ENCODE measurements at regions of chr12 and their contacts with region 1.

Region 1: DNA sequence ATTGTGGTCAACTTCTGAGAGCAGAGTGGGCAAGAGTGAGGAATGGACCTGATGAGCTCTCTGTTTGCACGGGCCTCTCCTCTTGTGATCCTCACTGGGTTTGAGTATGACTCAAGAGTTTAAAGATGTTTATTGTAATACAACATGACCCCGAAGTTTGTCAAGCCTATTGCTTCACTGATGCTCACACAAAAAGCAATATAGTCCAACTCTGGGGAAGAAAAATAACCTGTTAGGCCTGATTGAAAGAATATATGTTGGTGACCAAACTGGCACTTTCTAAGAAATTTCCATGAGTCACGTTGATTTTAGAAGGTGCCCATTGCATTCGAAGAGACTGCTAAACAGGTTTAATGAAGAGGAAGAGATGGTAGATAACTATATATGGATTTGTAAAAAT is 154.0 kb downstream of the TBX5 start:
- DNase-seq: no peak
- H3K4me3 ChIP-seq: no peak overlapping the region
- H3K27ac ChIP-seq: no peak overlapping the region
- H3K4me1 ChIP-seq: no peaks in the 10 kb centered on the region
- H3K27me3 ChIP-seq: no peaks in the 10 kb centered on the region
- CTCF ChIP-seq: no peak
- POLR2A ChIP-seq: no peak

Region 2: GRCh38 chr12:114209861-114210260 is 42.1 kb before region 1 on chr12:
- intact Hi-C with region 1: loop called (anchors 2 kb)
- DNase-seq: no peak
- H3K4me3 ChIP-seq: no peak overlapping the region
- H3K27ac ChIP-seq: no peak overlapping the region
- H3K4me1 ChIP-seq: no peaks in the 10 kb centered on the region
- H3K27me3 ChIP-seq: no peaks in the 10 kb centered on the region
- CTCF ChIP-seq: no peak
- POLR2A ChIP-seq: no peak

Measured in testis (tissue), 5 donors.